PC-9 (cell line): ENCODE measurements at regions of chr10 and their contacts with region 1.

Region 1: GRCh38 chr10:5813287-5814109 is at the start of gene GDI2:
- DNase-seq: peak; percentile 81 to 96
- H3K4me3 ChIP-seq: peak within 1 kb of the TSS; percentile 99
- H3K27ac ChIP-seq: peak within 1 kb of the TSS; percentile 94
- H3K4me1 ChIP-seq: peaks cover 25% of the 10 kb centered on the region
- H3K27me3 ChIP-seq: no peaks in the 10 kb centered on the region
- CTCF ChIP-seq: no peak
- total RNA-seq, gene GDI2: 152 and 196 TPM in 2 replicates

Region 2: GRCh38 chr10:5645375-5645774 is 168.1 kb before region 1 on chr10:
- CTCF ChIA-PET with region 1: no interaction called
- POLR2A ChIA-PET with region 1: no interaction called
- intact Hi-C with region 1: no loop called
- DNase-seq: no peak
- H3K4me3 ChIP-seq: no peak overlapping the region
- H3K27ac ChIP-seq: no peak overlapping the region
- H3K4me1 ChIP-seq: no peaks in the 10 kb centered on the region
- H3K27me3 ChIP-seq: no peaks in the 10 kb centered on the region
- CTCF ChIP-seq: no peak

Region 3: GRCh38 chr10:6267941-6268340 is 454.4 kb after region 1 on chr10:
- CTCF ChIA-PET with region 1: no interaction called
- POLR2A ChIA-PET with region 1: interaction called, 11 read pairs
- intact Hi-C with region 1: no loop called
- DNase-seq: no peak
- H3K4me3 ChIP-seq: no peak overlapping the region
- H3K27ac ChIP-seq: no peak overlapping the region
- H3K4me1 ChIP-seq: no peaks in the 10 kb centered on the region
- H3K27me3 ChIP-seq: no peaks in the 10 kb centered on the region
- CTCF ChIP-seq: no peak